ENCODE measurements at regions of chr7 and their contacts with region 1.

Region 1: GRCh38 chr7:7789551-7789988 is 71.2 kb upstream of the RPA3 start:
- DNase-seq: peak; percentile 73
- ATAC-seq: peak; percentile 99
- H3K4me3 ChIP-seq: no peak overlapping the region
- H3K27ac ChIP-seq: no peak overlapping the region; the same call in 1 of the 2 replicates
- H3K4me1 ChIP-seq: peaks cover 11% of the 10 kb centered on the region
- H3K27me3 ChIP-seq: no peaks in the 10 kb centered on the region
- CTCF ChIP-seq: no peak
- EP300 ChIP-seq: peak; percentile 28 to 84; a peak in 2 of 4 replicates
- POLR2A ChIP-seq: no peak
- RAD21 ChIP-seq: no peak

Region 2: DNA sequence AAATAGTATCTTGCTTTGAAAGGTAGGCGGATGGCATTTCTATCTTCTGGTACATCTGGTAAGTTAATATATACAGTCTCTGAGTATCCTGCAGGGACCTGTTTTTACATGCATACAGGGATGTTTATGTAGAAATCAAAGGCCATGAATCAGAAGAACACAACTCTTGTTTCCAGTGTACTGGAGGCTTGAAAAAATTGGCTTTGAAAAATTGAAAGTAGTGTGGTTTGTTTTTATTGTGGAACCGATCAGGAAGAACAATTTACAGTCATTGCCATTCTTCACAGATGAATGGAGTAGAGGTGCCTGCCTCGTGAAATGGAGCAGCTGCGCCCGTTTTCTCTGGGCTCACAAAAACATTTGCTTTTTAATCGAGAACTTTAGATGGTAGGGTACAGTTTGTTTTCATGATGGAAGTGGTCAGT is 17.2 kb before region 1 on chr7:
- CTCF ChIA-PET with region 1: interaction called, 3 read pairs
- POLR2A ChIA-PET with region 1: interaction called, 9 read pairs
- RAD21 ChIA-PET with region 1: interaction called, 12 read pairs
- SMC1A ChIA-PET with region 1: interaction called, 45 read pairs
- in situ Hi-C with region 1: no loop called
- intact Hi-C with region 1: no loop called
- DNase-seq: no peak
- ATAC-seq: peak; percentile 77
- H3K4me3 ChIP-seq: 0 out of 2 replicates have a peak overlapping the region, but pooled peaks have one; percentile 6
- H3K27ac ChIP-seq: no peak overlapping the region
- H3K4me1 ChIP-seq: peaks cover 18% of the 10 kb centered on the region
- H3K27me3 ChIP-seq: no peaks in the 10 kb centered on the region
- CTCF ChIP-seq: no peak
- EP300 ChIP-seq: no peak
- POLR2A ChIP-seq: no peak
- RAD21 ChIP-seq: no peak

Region 3: GRCh38 chr7:7808156-7808555 is 18.6 kb after region 1 on chr7:
- CTCF ChIA-PET with region 1: interaction called, 3 read pairs
- POLR2A ChIA-PET with region 1: interaction called, 3 read pairs
- RAD21 ChIA-PET with region 1: interaction called, 5 read pairs
- SMC1A ChIA-PET with region 1: interaction called, 10 read pairs
- in situ Hi-C with region 1: no loop called
- intact Hi-C with region 1: no loop called
- DNase-seq: no peak
- ATAC-seq: peak; percentile 87
- H3K4me3 ChIP-seq: no peak overlapping the region
- H3K27ac ChIP-seq: no peak overlapping the region
- H3K4me1 ChIP-seq: peaks cover 5% of the 10 kb centered on the region
- H3K27me3 ChIP-seq: no peaks in the 10 kb centered on the region
- CTCF ChIP-seq: no peak
- EP300 ChIP-seq: 0 out of 4 replicates have a peak, but pooled peaks of 1 of the 2 experiments have one; percentile 12
- POLR2A ChIP-seq: no peak
- RAD21 ChIP-seq: no peak

Region 4: GRCh38 chr7:7895754-7896153 is 106.2 kb after region 1 on chr7:
- CTCF ChIA-PET with region 1: no interaction called
- POLR2A ChIA-PET with region 1: no interaction called
- RAD21 ChIA-PET with region 1: no interaction called
- SMC1A ChIA-PET with region 1: no interaction called
- in situ Hi-C with region 1: no loop called
- intact Hi-C with region 1: no loop called
- DNase-seq: no peak
- ATAC-seq: no peak
- H3K4me3 ChIP-seq: no peak overlapping the region
- H3K27ac ChIP-seq: no peak overlapping the region
- H3K4me1 ChIP-seq: no peaks in the 10 kb centered on the region
- H3K27me3 ChIP-seq: no peaks in the 10 kb centered on the region
- CTCF ChIP-seq: no peak
- EP300 ChIP-seq: no peak
- POLR2A ChIP-seq: no peak
- RAD21 ChIP-seq: no peak

Measured in GM12878 (cell line).